ENCODE measurements at regions of chr14 and their contacts with region 1.

Region 1: DNA sequence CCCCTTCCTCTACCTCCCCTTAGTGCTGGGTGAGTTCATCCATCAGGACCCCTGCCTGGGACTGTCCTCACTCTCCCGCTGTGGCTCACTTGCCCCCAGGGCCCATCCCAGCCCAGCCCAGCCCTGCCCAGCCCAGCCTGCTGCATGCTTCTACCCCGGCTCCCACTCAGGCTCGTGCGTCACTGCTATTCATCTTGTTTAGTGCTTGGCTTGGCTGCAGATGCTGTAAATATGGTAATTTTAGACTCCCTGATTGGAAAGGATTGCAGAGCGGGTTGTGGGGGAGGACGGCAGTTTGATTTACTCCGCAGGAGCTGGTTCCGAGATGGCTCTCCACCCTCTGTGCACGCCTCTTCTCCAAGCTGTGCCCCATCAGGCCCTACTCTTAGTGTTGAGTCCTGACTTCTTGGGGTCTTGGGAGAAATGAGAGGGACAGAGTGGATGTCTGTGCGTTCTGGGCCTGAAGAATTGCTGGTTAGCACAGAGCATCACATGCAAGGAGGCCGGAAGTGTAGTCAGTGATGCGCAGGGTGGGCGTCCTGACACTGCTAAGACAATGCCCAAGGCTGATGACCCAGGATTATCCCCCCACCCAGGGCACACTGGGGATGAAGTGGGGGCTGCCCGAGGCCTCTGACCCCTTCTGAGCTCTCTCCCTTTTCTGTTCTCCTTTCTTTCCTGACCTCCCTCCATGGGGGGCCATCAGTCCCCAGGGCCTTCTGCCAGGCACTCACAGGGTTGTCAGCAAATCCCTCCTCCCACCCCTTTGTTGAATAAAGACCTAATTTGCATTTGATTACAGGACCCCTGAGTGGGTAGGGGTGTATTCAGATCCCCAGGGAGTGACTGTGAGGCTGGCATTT is 244.4 kb downstream of the ZFP36L1 start:
- DNase-seq: peak; percentile 77 to 86
- H3K4me3 ChIP-seq: no peak overlapping the region
- H3K27ac ChIP-seq: peak overlapping the region; percentile 96
- H3K4me1 ChIP-seq: peaks cover 70% of the 10 kb centered on the region
- H3K27me3 ChIP-seq: no peaks in the 10 kb centered on the region
- CTCF ChIP-seq: no peak

Region 2: GRCh38 chr14:68137704-68138619 is 410.5 kb before region 1 on chr14:
- CTCF ChIA-PET with region 1: no interaction called
- POLR2A ChIA-PET with region 1: no interaction called
- intact Hi-C with region 1: loop called (anchors 10 kb)
- DNase-seq: peak; percentile 88 to 92
- H3K4me3 ChIP-seq: no peak overlapping the region
- H3K27ac ChIP-seq: peak overlapping the region; percentile 57
- H3K4me1 ChIP-seq: peaks cover 58% of the 10 kb centered on the region
- H3K27me3 ChIP-seq: no peaks in the 10 kb centered on the region
- CTCF ChIP-seq: no peak

Region 3: DNA sequence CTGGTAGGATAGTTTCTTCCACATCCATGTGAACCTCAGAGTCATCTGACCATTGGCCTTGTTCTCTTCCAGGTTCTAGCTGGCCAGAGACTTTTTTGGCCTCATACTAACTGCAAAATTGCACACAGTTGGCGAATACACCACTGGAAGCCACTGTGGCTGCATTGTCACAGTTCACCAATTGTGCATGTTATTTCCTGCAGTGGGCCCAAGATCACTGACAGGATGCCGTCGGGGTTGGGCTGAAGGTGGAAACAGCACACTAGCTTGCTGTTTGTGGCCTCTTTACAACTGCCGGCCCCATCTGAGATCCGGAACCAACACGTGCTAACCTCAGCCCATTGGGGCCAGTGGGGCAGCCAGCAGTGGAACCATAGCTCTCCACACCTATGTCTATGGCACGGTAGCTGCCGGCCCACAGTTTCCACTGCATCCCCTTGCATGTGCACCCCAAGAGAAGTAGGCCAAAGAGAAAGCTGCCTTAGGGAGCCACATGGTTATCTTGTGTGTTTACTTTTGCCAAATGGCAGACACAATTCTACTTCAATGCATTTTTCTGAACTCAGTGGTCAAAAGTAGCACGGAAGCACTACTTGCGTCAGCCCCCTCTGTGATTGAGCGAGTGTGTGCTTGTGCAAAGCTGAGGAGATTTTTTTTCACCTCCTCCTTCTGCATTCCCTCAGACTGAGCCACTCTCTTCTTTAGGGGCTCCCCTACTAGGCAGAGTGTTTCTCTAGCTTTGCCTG is 264.9 kb before region 1 on chr14:
- CTCF ChIA-PET with region 1: no interaction called
- POLR2A ChIA-PET with region 1: no interaction called
- intact Hi-C with region 1: no loop called
- DNase-seq: no peak
- H3K4me3 ChIP-seq: no peak overlapping the region
- H3K27ac ChIP-seq: no peak overlapping the region
- H3K4me1 ChIP-seq: peaks cover 14% of the 10 kb centered on the region
- H3K27me3 ChIP-seq: no peaks in the 10 kb centered on the region
- CTCF ChIP-seq: no peak

Region 4: GRCh38 chr14:68466491-68467032 is 81.9 kb before region 1 on chr14:
- CTCF ChIA-PET with region 1: no interaction called
- POLR2A ChIA-PET with region 1: interaction called, 6 read pairs
- intact Hi-C with region 1: loop called (anchors 1 kb)
- DNase-seq: peak; percentile 65 to 100
- H3K4me3 ChIP-seq: peak overlapping the region; percentile 23; the same call in 1 of the 2 replicates
- H3K27ac ChIP-seq: peak overlapping the region; percentile 96
- H3K4me1 ChIP-seq: peaks cover 95% of the 10 kb centered on the region
- H3K27me3 ChIP-seq: no peaks in the 10 kb centered on the region
- CTCF ChIP-seq: no peak

Region 5: GRCh38 chr14:68513838-68514620 is 34.4 kb before region 1 on chr14:
- CTCF ChIA-PET with region 1: interaction called, 3 read pairs
- POLR2A ChIA-PET with region 1: no interaction called
- intact Hi-C with region 1: loop called (anchors 1 kb)
- DNase-seq: no peak
- H3K4me3 ChIP-seq: no peak overlapping the region
- H3K27ac ChIP-seq: peak overlapping the region; percentile 83
- H3K4me1 ChIP-seq: peaks cover 61% of the 10 kb centered on the region
- H3K27me3 ChIP-seq: no peaks in the 10 kb centered on the region
- CTCF ChIP-seq: no peak

Region 6: GRCh38 chr14:68535404-68536017 is 12.9 kb before region 1 on chr14:
- CTCF ChIA-PET with region 1: no interaction called
- POLR2A ChIA-PET with region 1: interaction called, 10 read pairs
- intact Hi-C with region 1: no loop called
- DNase-seq: peak; percentile 38 to 64
- H3K4me3 ChIP-seq: no peak overlapping the region
- H3K27ac ChIP-seq: peak overlapping the region; percentile 77
- H3K4me1 ChIP-seq: peaks cover 24% of the 10 kb centered on the region
- H3K27me3 ChIP-seq: no peaks in the 10 kb centered on the region
- CTCF ChIP-seq: no peak

Region 7: DNA sequence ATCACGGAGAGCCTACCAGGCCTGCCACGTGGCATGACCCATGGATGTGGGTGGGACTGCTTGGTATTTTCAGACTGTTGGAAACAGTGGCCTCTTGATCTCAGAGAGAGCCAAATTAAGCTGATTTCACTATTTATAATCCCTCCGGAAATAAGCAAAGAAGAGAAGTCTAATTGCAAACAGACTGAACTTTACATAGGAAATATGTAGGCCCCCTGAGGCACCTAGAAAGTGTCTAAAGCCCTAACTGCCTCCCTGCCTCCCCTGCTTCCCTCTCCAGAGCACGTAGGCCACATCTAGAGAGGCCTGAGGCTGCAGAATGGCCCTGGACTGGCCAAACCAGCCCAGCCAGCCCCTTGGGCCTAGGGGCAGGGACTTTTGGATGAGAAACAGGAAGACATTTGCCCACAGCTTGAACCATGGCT is 120.7 kb after region 1 on chr14:
- CTCF ChIA-PET with region 1: no interaction called
- POLR2A ChIA-PET with region 1: no interaction called
- intact Hi-C with region 1: no loop called
- DNase-seq: peak; percentile 79 to 95
- H3K4me3 ChIP-seq: no peak overlapping the region
- H3K27ac ChIP-seq: peak overlapping the region; percentile 84
- H3K4me1 ChIP-seq: peaks cover 80% of the 10 kb centered on the region
- H3K27me3 ChIP-seq: no peaks in the 10 kb centered on the region
- CTCF ChIP-seq: no peak

Region 8: GRCh38 chr14:68695326-68695768 is 146.9 kb after region 1 on chr14:
- CTCF ChIA-PET with region 1: no interaction called
- POLR2A ChIA-PET with region 1: no interaction called
- intact Hi-C with region 1: loop called (anchors 2 kb)
- DNase-seq: peak; percentile 86 to 100
- H3K4me3 ChIP-seq: no peak overlapping the region
- H3K27ac ChIP-seq: peak overlapping the region; percentile 93
- H3K4me1 ChIP-seq: peaks cover 47% of the 10 kb centered on the region
- H3K27me3 ChIP-seq: no peaks in the 10 kb centered on the region
- CTCF ChIP-seq: no peak